CD8-positive, alpha-beta T cell (primary cell): ENCODE measurements at regions of chr20 and their contacts with region 1.

Region 1: GRCh38 chr20:32109392-32110172 is at the start of gene TM9SF4:
- DNase-seq: peak; percentile 74 to 97 (median 91)
- ATAC-seq: peak; percentile 89
- H3K4me3 ChIP-seq: peak within 1 kb of the TSS; percentile 65 to 90
- H3K4me3 Mint-ChIP-seq: peak within 1 kb of the TSS; percentile 95
- H3K27ac ChIP-seq: peak within 1 kb of the TSS; percentile 91 to 99
- H3K27ac Mint-ChIP-seq: peak within 1 kb of the TSS; percentile 100
- H3K4me1 ChIP-seq: peaks cover 23% of the 10 kb centered on the region
- H3K4me1 Mint-ChIP-seq: peaks cover 37% of the 10 kb centered on the region
- H3K27me3 ChIP-seq: no peaks in the 10 kb centered on the region
- H3K27me3 Mint-ChIP-seq: no peaks in the 10 kb centered on the region
- CTCF ChIP-seq: no peak
- total RNA-seq, gene TM9SF4: 27.5 to 29.2 TPM

Region 2: GRCh38 chr20:31879143-31879987 is 230.2 kb before region 1 on chr20:
- CTCF ChIA-PET with region 1: no interaction called
- POLR2A ChIA-PET with region 1: interaction called, 3 read pairs
- intact Hi-C with region 1: loop called (anchors 1 to 2 kb)
- DNase-seq: peak; percentile 50 to 90 (median 74)
- ATAC-seq: peak; percentile 84
- H3K4me3 ChIP-seq: peak overlapping the region; percentile 59 to 73
- H3K4me3 Mint-ChIP-seq: peak overlapping the region; percentile 91
- H3K27ac ChIP-seq: no peak overlapping the region
- H3K27ac Mint-ChIP-seq: peak overlapping the region; percentile 63
- H3K4me1 ChIP-seq: no peaks in the 10 kb centered on the region
- H3K4me1 Mint-ChIP-seq: peaks cover 11% of the 10 kb centered on the region
- H3K27me3 ChIP-seq: no peaks in the 10 kb centered on the region
- H3K27me3 Mint-ChIP-seq: peaks cover 3% of the 10 kb centered on the region
- CTCF ChIP-seq: no peak

Region 3: DNA sequence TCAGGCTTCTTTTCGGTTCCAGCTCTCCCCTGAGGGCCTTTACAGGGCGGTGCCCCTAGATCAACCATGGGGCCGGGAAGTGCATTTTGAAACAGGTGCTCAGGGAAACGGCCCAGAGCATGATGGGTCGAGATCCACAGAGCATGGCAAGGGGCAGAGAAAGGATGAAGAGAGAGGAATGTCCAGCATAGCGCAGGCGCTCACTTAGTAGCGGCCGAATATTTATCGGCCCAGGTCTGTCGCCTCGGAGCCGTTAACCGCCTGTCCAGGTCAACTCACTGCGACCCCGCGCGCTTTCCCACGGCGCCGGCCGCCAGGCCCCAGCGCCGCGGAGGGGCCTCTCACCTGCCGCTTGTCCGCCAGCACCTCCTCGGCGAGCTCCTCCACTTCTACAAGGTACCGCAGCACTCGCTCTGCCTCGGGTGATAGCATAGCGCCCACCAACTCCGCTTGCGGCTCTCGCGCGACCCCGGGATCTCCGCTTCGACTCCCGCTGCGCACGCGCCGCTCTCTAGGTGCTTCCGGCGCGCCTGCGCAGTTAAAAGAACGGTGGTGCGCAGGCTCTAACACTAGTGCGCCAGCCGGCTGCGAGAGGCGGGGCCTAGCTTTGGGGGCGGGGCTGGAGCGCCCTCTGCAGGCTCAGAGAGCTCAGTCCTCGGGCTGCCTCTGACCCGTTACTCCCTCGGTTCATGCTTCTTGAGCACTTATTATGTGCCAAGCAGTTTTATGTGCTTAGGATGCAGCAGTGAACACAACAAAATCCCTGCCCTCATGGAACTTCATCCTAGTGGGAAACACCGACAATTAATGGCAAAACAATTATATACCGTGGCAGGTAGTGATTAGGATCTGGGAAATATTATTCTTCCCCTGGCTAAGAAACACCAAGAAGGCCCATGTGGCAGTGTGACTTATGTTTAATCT is 157.8 kb before region 1 on chr20 and contains the start of gene PDRG1:
- CTCF ChIA-PET with region 1: interaction called, 3 read pairs
- POLR2A ChIA-PET with region 1: no interaction called
- intact Hi-C with region 1: loop called (anchors 1 kb)
- DNase-seq: peak; percentile 91 to 98 (median 97)
- ATAC-seq: peak; percentile 98
- H3K4me3 ChIP-seq: peak within 1 kb of the TSS; percentile 84 to 96
- H3K4me3 Mint-ChIP-seq: peak within 1 kb of the TSS; percentile 97
- H3K27ac ChIP-seq: peak within 1 kb of the TSS; percentile 46 to 71
- H3K27ac Mint-ChIP-seq: peak within 1 kb of the TSS; percentile 96
- H3K4me1 ChIP-seq: peaks cover 16% of the 10 kb centered on the region
- H3K4me1 Mint-ChIP-seq: peaks cover 31% of the 10 kb centered on the region
- H3K27me3 ChIP-seq: no peaks in the 10 kb centered on the region
- H3K27me3 Mint-ChIP-seq: peaks cover 12% of the 10 kb centered on the region
- CTCF ChIP-seq: peak; percentile 88
- total RNA-seq, gene PDRG1: 12.2 to 13.4 TPM

Region 4: GRCh38 chr20:32091888-32092346 is 17.7 kb before region 1 on chr20:
- CTCF ChIA-PET with region 1: interaction called, 15 read pairs
- POLR2A ChIA-PET with region 1: no interaction called
- intact Hi-C with region 1: no loop called
- DNase-seq: peak; percentile 56 to 80 (median 77)
- ATAC-seq: peak; percentile 98
- H3K4me3 ChIP-seq: no peak overlapping the region
- H3K4me3 Mint-ChIP-seq: no peak overlapping the region
- H3K27ac ChIP-seq: no peak overlapping the region
- H3K27ac Mint-ChIP-seq: no peak overlapping the region
- H3K4me1 ChIP-seq: no peaks in the 10 kb centered on the region
- H3K4me1 Mint-ChIP-seq: no peaks in the 10 kb centered on the region
- H3K27me3 ChIP-seq: no peaks in the 10 kb centered on the region
- H3K27me3 Mint-ChIP-seq: peaks cover 9% of the 10 kb centered on the region
- CTCF ChIP-seq: peak; percentile 94

Region 5: DNA sequence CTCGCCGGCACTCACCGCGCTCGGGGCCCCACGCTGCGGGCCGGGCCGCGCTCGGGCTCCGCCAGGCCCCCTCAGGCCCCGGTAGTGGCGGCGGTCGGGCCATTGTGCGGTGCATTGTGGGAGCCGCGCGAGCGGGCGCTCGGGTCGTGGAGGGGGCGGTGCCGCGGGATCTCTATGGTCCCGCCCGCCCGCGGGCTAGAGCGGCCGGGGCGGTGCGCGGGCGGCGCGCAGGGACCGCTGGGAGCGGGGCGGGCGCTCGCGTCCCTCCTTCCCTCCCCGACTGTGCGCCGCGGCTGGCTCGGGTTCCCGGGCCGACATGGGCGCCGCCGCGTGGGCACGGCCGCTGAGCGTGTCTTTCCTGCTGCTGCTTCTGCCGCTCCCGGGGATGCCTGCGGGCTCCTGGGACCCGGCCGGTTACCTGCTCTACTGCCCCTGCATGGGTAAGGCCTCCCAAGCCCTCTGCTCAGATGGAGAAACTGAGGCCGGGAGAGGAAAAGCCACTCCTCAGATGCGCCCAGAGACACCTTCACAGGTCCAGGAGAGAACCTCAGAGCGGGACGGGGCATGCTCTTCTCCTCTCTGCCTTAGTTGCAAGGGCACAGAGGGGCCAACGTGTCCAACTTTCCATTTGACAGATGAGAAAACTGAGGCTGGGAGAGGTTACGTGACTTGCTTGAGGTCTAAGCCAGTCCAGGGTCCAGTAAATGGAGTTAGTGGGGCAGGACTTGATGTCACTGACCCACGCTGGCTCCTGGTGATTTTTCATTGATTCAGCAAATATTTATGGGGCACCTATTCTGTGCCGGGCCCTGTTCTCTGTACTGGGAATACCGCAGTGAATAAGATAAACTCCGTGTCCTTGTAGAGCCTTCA is 98.3 kb after region 1 on chr20 and contains the starts of genes PLAGL2 and POFUT1:
- CTCF ChIA-PET with region 1: no interaction called
- POLR2A ChIA-PET with region 1: interaction called, 3 read pairs
- intact Hi-C with region 1: loop called in 1 of 2 experiments (anchors 1 kb)
- DNase-seq: peak; percentile 73 to 94 (median 86)
- ATAC-seq: peak; percentile 96
- H3K4me3 ChIP-seq: peak within 1 kb of the TSS; percentile 84 to 86
- H3K4me3 Mint-ChIP-seq: peak within 1 kb of the TSS; percentile 94
- H3K27ac ChIP-seq: peak within 1 kb of the TSS; percentile 68 to 70
- H3K27ac Mint-ChIP-seq: peak within 1 kb of the TSS; percentile 92
- H3K4me1 ChIP-seq: peaks cover 53% of the 10 kb centered on the region
- H3K4me1 Mint-ChIP-seq: peaks cover 82% of the 10 kb centered on the region
- H3K27me3 ChIP-seq: no peaks in the 10 kb centered on the region
- H3K27me3 Mint-ChIP-seq: no peaks in the 10 kb centered on the region
- CTCF ChIP-seq: no peak
- total RNA-seq, gene PLAGL2: 15.8 to 16.9 TPM
- total RNA-seq, gene POFUT1: 5.1 to 6.3 TPM

Region 6: DNA sequence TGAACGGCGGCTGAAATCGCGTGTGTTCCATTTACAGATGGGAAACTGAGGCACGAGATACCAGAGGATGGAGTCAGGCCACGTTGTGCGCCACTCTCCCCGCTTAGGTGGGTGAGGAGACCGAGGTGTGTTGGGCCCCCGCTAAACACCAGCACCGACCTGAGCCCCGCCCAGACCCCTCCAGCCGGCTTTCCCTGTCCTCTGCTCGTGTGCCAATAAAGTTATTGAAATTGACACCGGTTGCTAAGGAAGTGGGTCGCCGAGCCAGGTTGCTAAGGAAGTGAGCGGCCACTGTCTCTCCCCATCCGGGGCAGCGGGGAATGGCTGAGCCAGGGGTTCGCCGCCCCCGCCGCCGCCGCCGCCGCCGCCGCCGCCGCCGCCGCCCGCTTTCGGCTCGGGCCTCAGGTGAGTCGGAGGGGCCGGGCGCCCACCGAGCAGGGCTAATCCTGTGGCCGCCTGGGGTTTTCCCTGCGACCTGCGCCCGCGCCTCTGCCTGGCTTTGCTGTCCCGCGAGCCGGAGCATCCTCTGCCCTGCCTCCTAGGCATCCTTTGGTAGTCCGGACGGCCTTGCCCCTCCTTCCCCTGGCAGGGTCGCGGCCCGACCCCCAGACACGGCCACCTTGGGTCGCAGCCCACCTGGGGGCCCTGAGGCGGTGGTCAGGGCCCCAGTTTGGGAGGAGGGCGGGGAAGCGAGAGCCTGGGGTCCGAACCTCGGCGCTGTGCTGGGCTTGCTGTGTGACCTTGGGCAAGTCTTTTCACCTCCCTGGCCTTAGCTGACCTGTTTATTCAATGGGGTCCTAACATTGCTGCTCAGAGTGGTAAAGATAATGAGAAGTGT is 168.0 kb after region 1 on chr20 and contains the start of gene KIF3B:
- CTCF ChIA-PET with region 1: no interaction called
- POLR2A ChIA-PET with region 1: no interaction called
- intact Hi-C with region 1: loop called in 1 of 2 experiments (anchors 5 kb)
- DNase-seq: peak; percentile 68 to 94 (median 87)
- ATAC-seq: peak; percentile 85
- H3K4me3 ChIP-seq: peak within 1 kb of the TSS; percentile 91 to 97
- H3K4me3 Mint-ChIP-seq: peak within 1 kb of the TSS; percentile 90
- H3K27ac ChIP-seq: peak within 1 kb of the TSS; percentile 64 to 86
- H3K27ac Mint-ChIP-seq: peak within 1 kb of the TSS; percentile 93
- H3K4me1 ChIP-seq: peaks cover 20% of the 10 kb centered on the region
- H3K4me1 Mint-ChIP-seq: peaks cover 44% of the 10 kb centered on the region
- H3K27me3 ChIP-seq: no peaks in the 10 kb centered on the region
- H3K27me3 Mint-ChIP-seq: no peaks in the 10 kb centered on the region
- CTCF ChIP-seq: no peak
- total RNA-seq, gene KIF3B: 7.1 to 8.1 TPM

Region 7: DNA sequence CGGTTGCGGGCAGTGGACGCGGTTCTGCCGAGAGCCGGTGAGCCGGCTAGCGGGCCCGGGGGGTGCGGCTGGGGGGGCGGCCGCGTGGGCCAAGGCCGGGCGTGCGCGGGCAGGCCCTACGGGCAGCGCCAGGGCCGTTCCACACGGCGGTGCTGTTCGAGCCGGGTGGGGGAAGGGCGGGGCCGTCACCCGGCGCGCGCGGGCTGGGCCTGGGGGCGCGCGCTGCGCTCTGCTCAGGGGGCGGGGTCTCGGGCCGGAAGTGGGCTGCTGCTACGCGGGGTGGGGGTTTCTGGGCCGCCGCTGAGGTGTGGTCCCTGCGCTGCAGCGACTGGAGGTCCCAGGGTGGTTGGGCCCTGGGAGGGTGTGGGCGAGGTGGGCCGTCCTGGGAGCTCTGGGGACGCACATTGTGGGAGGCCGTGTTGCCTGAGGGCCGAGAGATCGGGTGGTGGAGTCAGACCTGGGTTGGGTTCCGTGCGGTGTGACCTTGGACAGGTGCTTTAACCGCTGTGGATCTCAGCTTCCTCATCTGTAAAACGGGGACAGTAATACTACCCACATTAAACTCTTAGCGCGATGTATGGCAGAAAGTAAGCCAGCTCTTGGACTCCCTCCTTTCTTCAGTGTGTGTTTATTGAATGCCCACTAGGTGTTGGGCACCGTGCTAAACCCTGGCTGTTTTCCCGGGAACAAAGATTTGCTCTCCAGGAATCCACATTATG is 710.6 kb after region 1 on chr20:
- CTCF ChIA-PET with region 1: no interaction called
- POLR2A ChIA-PET with region 1: no interaction called
- intact Hi-C with region 1: loop called in 1 of 2 experiments (anchors 2 kb)
- DNase-seq: peak in 8 of 9 experiments; percentile 78 to 92 (median 86)
- ATAC-seq: peak; percentile 76
- H3K4me3 ChIP-seq: peak overlapping the region; percentile 71 to 72
- H3K4me3 Mint-ChIP-seq: peak overlapping the region; percentile 97
- H3K27ac ChIP-seq: peak overlapping the region; percentile 88 to 93
- H3K27ac Mint-ChIP-seq: peak overlapping the region; percentile 98
- H3K4me1 ChIP-seq: peaks cover 41% of the 10 kb centered on the region
- H3K4me1 Mint-ChIP-seq: peaks cover 42% of the 10 kb centered on the region
- H3K27me3 ChIP-seq: no peaks in the 10 kb centered on the region
- H3K27me3 Mint-ChIP-seq: no peaks in the 10 kb centered on the region
- CTCF ChIP-seq: no peak